ENCODE measurements at regions of chr18 and their contacts with region 1.

Region 1: DNA sequence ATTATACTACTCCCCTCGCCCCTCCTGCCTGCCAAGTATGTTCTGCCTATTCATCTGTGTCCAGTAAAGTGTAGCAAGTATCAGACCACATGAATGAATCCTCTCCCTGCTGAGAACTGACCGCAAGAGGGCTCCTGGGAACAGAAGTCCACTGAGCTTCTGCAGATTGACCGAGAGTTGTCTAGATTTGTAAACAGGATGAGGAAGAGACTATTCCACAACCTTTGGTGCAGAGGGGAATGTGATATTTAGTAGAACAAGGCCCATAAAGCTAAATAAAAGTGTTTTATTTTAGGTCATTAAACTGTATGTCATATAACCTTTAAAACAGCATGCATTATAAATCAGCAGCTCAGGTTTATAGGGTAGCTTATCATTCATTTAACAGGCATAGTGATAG is 377.0 kb downstream of the DCC start:
- DNase-seq: peak; percentile 9
- ATAC-seq: 0 out of 2 replicates have a peak, but pooled peaks have one; percentile 26
- H3K4me3 Mint-ChIP-seq: no peak overlapping the region
- H3K27ac Mint-ChIP-seq: no peak overlapping the region
- H3K4me1 Mint-ChIP-seq: peaks cover 4% of the 10 kb centered on the region
- H3K27me3 Mint-ChIP-seq: no peaks in the 10 kb centered on the region
- CTCF ChIP-seq: no peak

Region 2: DNA sequence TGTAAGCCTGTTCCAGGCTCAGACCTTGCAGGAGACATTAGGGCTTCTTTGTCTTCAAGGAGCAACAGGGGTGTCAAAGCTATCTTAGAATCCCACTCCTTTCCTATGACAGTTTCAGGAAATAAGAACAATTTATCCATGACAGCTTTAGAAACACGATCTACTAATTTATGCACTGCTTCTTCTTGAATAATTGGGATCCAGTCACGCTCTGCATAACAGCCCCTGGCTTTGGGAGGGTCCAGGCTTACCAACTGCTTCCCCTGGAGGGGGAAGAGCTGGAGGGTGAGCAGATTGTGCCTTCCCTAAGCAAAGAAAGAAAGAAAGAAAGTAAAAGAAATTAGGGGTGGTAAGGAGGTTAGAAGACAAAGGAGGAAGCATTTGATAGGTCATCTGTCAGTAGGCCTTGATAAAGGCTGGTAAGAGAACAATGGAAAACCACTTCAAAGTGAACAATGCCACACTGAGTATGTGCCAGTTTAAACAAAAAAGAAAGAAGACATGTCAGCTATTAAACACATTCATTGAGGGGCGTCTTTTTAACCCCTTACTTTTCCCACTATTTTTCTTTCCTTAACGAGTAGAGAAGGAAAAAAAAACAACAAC is 49.4 kb before region 1 on chr18:
- CTCF ChIA-PET with region 1: no interaction called
- POLR2A ChIA-PET with region 1: no interaction called
- DNase-seq: no peak
- ATAC-seq: no peak
- H3K4me3 Mint-ChIP-seq: no peak overlapping the region
- H3K27ac Mint-ChIP-seq: no peak overlapping the region
- H3K4me1 Mint-ChIP-seq: no peaks in the 10 kb centered on the region
- H3K27me3 Mint-ChIP-seq: no peaks in the 10 kb centered on the region
- CTCF ChIP-seq: no peak

Region 3: DNA sequence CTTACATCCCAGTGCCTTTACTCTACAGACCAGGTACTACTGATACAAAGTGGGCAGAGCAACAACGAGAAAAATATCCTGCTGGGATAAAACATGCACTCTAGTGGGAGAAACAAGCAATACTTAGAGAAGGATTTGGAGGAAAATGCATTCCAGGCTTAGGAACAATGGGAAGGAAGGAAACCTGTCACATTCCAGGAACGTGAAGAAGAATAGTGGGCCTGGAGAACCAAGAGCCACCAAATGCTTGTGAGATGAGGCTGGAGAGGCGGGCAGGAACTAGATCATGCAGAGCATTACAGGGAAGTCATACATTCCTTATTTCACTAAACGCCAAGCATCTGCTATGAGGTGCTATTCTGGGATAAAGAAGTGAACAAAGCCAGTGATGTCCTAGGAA is 34.7 kb before region 1 on chr18:
- CTCF ChIA-PET with region 1: no interaction called
- POLR2A ChIA-PET with region 1: no interaction called
- DNase-seq: no peak
- ATAC-seq: peak; percentile 84
- H3K4me3 Mint-ChIP-seq: no peak overlapping the region
- H3K27ac Mint-ChIP-seq: no peak overlapping the region; the same call in 1 of the 2 replicates
- H3K4me1 Mint-ChIP-seq: peaks cover 33% of the 10 kb centered on the region
- H3K27me3 Mint-ChIP-seq: no peaks in the 10 kb centered on the region
- CTCF ChIP-seq: no peak

Region 4: GRCh38 chr18:52869963-52870907 is 153.3 kb after region 1 on chr18:
- CTCF ChIA-PET with region 1: interaction called, 12 read pairs
- POLR2A ChIA-PET with region 1: no interaction called
- DNase-seq: peak; percentile 46
- ATAC-seq: peak; percentile 93
- H3K4me3 Mint-ChIP-seq: no peak overlapping the region
- H3K27ac Mint-ChIP-seq: no peak overlapping the region; the same call in 1 of the 2 replicates
- H3K4me1 Mint-ChIP-seq: peaks cover 6% of the 10 kb centered on the region
- H3K27me3 Mint-ChIP-seq: no peaks in the 10 kb centered on the region
- CTCF ChIP-seq: no peak